ENCODE measurements at regions of chr18 and their contacts with region 1.

Region 1: GRCh38 chr18:76709659-76710645 is 112.4 kb upstream of the ZNF236 start:
- DNase-seq: no peak
- H3K4me3 ChIP-seq: no peak overlapping the region
- CTCF ChIP-seq: peak; percentile 76

Region 2: GRCh38 chr18:76371301-76372203 is 338.4 kb before region 1 on chr18:
- CTCF ChIA-PET with region 1: interaction called, 11 read pairs
- POLR2A ChIA-PET with region 1: no interaction called
- DNase-seq: no peak
- H3K4me3 ChIP-seq: no peak overlapping the region
- CTCF ChIP-seq: no peak

Region 3: GRCh38 chr18:76620321-76621170 is 89.4 kb before region 1 on chr18:
- CTCF ChIA-PET with region 1: interaction called, 15 read pairs
- POLR2A ChIA-PET with region 1: no interaction called
- DNase-seq: no peak
- H3K4me3 ChIP-seq: peak overlapping the region; percentile 42
- CTCF ChIP-seq: peak; percentile 87

Region 4: GRCh38 chr18:76697441-76697901 is 12.5 kb before region 1 on chr18:
- CTCF ChIA-PET with region 1: interaction called, 17 read pairs
- POLR2A ChIA-PET with region 1: no interaction called
- DNase-seq: no peak
- H3K4me3 ChIP-seq: peak overlapping the region; percentile 27
- CTCF ChIP-seq: no peak

Region 5: DNA sequence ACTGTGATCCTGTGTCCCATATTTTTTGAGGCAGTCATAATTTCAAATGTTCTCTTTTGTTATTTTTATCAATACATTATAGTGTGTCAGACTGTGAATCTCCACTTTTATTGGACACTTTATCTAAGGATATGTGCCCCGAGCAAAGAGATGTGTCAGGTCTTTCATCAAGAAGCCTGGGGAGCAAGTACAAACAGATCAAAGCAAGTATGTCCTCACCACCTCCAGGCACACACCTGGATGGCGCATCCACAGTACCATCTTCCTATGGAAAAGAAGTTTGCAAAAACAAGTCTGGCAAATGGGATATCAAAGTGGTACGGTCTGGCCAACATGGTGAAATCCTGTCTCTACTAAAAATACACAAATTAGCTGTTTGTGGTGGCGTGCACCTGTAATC is 31.4 kb after region 1 on chr18:
- CTCF ChIA-PET with region 1: interaction called, 10 read pairs
- POLR2A ChIA-PET with region 1: no interaction called
- DNase-seq: no peak
- H3K4me3 ChIP-seq: no peak overlapping the region
- CTCF ChIP-seq: no peak